Vagina (tissue), 2 donors: ENCODE measurements at regions of chr4 and their contacts with region 1.

Region 1: GRCh38 chr4:83012687-83013419 is 2.2 kb upstream of the LIN54 start:
- DNase-seq: peak; percentile 98 to 99
- H3K4me3 ChIP-seq: peak overlapping the region; percentile 70 to 83
- H3K27ac ChIP-seq: peak overlapping the region; percentile 92
- H3K4me1 ChIP-seq: peaks cover 31% of the 10 kb centered on the region
- H3K27me3 ChIP-seq: no peaks in the 10 kb centered on the region
- CTCF ChIP-seq: peak in 2 of 3 experiments; percentile 13 to 66
- POLR2A ChIP-seq: no peak

Region 2: GRCh38 chr4:82900331-82901128 is 112.3 kb before region 1 on chr4 and contains the start of gene THAP9:
- intact Hi-C with region 1: loop called (anchors 5 kb)
- DNase-seq: peak; percentile 99 to 100
- H3K4me3 ChIP-seq: peak within 1 kb of the TSS; percentile 60 to 76
- H3K27ac ChIP-seq: peak within 1 kb of the TSS; percentile 98
- H3K4me1 ChIP-seq: peaks cover 45% of the 10 kb centered on the region
- H3K27me3 ChIP-seq: no peaks in the 10 kb centered on the region
- CTCF ChIP-seq: no peak
- POLR2A ChIP-seq: peak; percentile 64 to 85
- total RNA-seq, gene THAP9: 4.2 TPM

Region 3: DNA sequence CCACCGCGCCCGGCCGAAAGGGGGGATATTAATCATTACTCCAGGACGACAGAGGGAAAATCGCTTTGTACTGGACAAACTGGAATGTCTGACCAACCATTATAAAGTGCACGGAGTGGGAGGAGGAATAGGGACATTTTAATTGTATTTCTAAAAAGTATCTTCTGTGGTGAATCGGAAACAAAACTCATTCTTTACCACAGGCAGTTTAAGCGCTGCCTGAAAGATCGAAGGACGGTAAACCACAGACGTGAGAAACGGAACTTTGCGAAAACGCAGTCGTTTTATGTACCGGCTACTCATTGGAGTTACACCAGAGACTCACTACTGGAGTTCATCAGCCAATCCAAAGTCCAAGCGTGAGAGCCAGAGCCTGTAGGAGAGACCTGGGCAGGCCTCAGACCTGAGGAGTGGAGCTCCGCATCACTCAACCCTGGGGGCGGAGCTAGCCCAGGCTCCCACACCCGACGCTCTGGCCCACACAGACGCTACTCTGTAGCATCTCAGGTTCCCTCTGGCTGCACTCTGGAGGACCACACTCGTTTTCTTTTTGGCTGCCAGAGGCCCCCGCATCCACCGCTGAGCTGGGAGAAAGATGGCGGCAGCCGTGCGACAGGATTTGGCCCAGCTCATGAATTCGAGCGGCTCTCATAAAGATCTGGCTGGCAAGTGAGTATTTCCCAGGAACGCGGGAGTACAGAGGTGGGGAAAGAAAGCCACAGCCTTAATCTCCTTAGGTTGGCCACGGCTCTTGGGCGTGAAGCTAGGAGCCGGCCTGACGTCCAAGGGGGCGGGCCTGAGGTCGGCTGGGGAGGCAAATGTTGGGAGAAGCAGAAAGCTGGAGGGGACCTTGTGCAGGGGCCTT is 22.0 kb after region 1 on chr4 and contains the start of gene COPS4:
- intact Hi-C with region 1: loop called (anchors 2 kb)
- DNase-seq: peak; percentile 97 to 99
- H3K4me3 ChIP-seq: peak within 1 kb of the TSS; percentile 62 to 75
- H3K27ac ChIP-seq: peak within 1 kb of the TSS; percentile 83
- H3K4me1 ChIP-seq: peaks cover 38% of the 10 kb centered on the region
- H3K27me3 ChIP-seq: no peaks in the 10 kb centered on the region
- CTCF ChIP-seq: peak; percentile 19 to 58 (median 24)
- POLR2A ChIP-seq: peak in 1 of 2 donors; percentile 44
- total RNA-seq, gene COPS4: 18.7 TPM

Region 4: GRCh38 chr4:84669201-84669600 is 1656.3 kb after region 1 on chr4:
- intact Hi-C with region 1: no loop called
- DNase-seq: no peak
- H3K4me3 ChIP-seq: no peak overlapping the region
- H3K27ac ChIP-seq: no peak overlapping the region
- H3K4me1 ChIP-seq: no peaks in the 10 kb centered on the region
- H3K27me3 ChIP-seq: no peaks in the 10 kb centered on the region
- CTCF ChIP-seq: no peak
- POLR2A ChIP-seq: no peak